HEK293 (cell line): ENCODE measurements at regions of chrX and their contacts with region 1.

Region 1: GRCh38 chrX:103533511-103534216 is 14.4 kb upstream of the RAB40A start:
- H3K4me3 ChIP-seq: no peak overlapping the region
- H3K27ac ChIP-seq: no peak overlapping the region
- H3K4me1 ChIP-seq: no peaks in the 10 kb centered on the region
- CTCF ChIP-seq: peak; percentile 67; the same call in 1 of the 2 replicates

Region 2: GRCh38 chrX:103817502-103817901 is 283.8 kb after region 1 on chrX:
- CTCF ChIA-PET with region 1: interaction called, 10 read pairs
- POLR2A ChIA-PET with region 1: no interaction called
- H3K4me3 ChIP-seq: no peak overlapping the region
- H3K27ac ChIP-seq: no peak overlapping the region
- H3K4me1 ChIP-seq: no peaks in the 10 kb centered on the region
- CTCF ChIP-seq: no peak